ENCODE measurements at regions of chr2 and their contacts with region 1.

Region 1: DNA sequence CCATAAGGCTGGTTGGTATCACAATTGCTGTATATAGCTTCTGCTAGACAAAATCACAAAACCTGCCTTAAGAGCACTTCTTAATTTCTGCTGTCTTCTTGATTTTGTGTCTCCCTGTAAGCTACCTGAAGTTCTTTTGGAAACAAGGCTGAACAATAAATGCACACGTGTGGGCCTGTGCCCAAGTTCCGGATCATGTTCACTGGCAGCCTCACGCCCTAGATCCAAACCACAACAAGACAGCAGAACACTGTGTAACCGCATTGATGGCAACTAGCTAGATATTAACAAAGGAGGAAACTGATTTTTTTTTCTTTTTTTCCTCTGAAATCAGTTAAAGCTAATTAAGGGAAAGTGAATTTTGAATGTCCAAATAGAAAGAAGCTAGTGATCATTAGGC is 81.5 kb upstream of the LYPD6B start:
- DNase-seq: no peak
- ATAC-seq: no peak
- H3K4me3 ChIP-seq: no peak overlapping the region
- H3K27ac ChIP-seq: no peak overlapping the region
- H3K4me1 ChIP-seq: no peaks in the 10 kb centered on the region
- H3K27me3 ChIP-seq: no peaks in the 10 kb centered on the region; the same call in 1 of the 2 replicates
- CTCF ChIP-seq: no peak

Region 2: GRCh38 chr2:148896136-148896535 is 60.9 kb before region 1 on chr2:
- CTCF ChIA-PET with region 1: interaction called, 12 read pairs
- POLR2A ChIA-PET with region 1: no interaction called
- in situ Hi-C with region 1: no loop called
- intact Hi-C with region 1: no loop called
- DNase-seq: no peak
- ATAC-seq: no peak
- H3K4me3 ChIP-seq: no peak overlapping the region
- H3K27ac ChIP-seq: no peak overlapping the region
- H3K4me1 ChIP-seq: no peaks in the 10 kb centered on the region
- H3K27me3 ChIP-seq: peaks cover 7% of the 10 kb centered on the region; the same call in 1 of the 2 replicates
- CTCF ChIP-seq: no peak

Region 3: GRCh38 chr2:149040451-149040850 is 83.4 kb after region 1 on chr2:
- CTCF ChIA-PET with region 1: no interaction called
- POLR2A ChIA-PET with region 1: no interaction called
- in situ Hi-C with region 1: no loop called
- intact Hi-C with region 1: no loop called
- DNase-seq: no peak
- ATAC-seq: no peak
- H3K4me3 ChIP-seq: no peak overlapping the region
- H3K27ac ChIP-seq: no peak overlapping the region
- H3K4me1 ChIP-seq: no peaks in the 10 kb centered on the region
- H3K27me3 ChIP-seq: peaks cover 14% of the 10 kb centered on the region
- CTCF ChIP-seq: peak; percentile 71